Left colon (tissue), 2 donors: ENCODE measurements at regions of chr5 and their contacts with region 1.

Region 1: GRCh38 chr5:137743031-137743640 is 7.2 kb upstream of the KLHL3 start:
- DNase-seq: peak; percentile 39 to 50
- ATAC-seq: peak; percentile 82

Region 2: GRCh38 chr5:137461391-137462264 is 281.5 kb before region 1 on chr5:
- intact Hi-C with region 1: no loop called
- DNase-seq: no peak
- ATAC-seq: no peak

Region 3: GRCh38 chr5:137629646-137630045 is 113.5 kb before region 1 on chr5:
- intact Hi-C with region 1: loop called in 1 of 2 experiments (anchors 10 kb)
- DNase-seq: no peak
- ATAC-seq: peak; percentile 79

Region 4: GRCh38 chr5:137660349-137660817 is 82.8 kb before region 1 on chr5:
- intact Hi-C with region 1: loop called in 1 of 2 experiments (anchors 2 kb)
- DNase-seq: peak; percentile 59 to 84
- ATAC-seq: peak; percentile 95